ENCODE measurements at regions of chr3 and their contacts with region 1.

Region 1: GRCh38 chr3:47282424-47283192 is at the starts of genes KIF9 and KLHL18:
- DNase-seq: peak; percentile 94 to 99 (median 96)
- ATAC-seq: peak; percentile 93
- H3K4me3 ChIP-seq: peak within 1 kb of the TSS; percentile 82
- H3K27ac ChIP-seq: peak within 1 kb of the TSS; percentile 86
- H3K4me1 ChIP-seq: peaks cover 12 to 14% of the 10 kb centered on the region in 2 experiments
- H3K27me3 ChIP-seq: no peaks in the 10 kb centered on the region
- CTCF ChIP-seq: 0 out of 6 replicates have a peak, but pooled peaks of 1 of the 3 experiments have one; percentile 4
- EP300 ChIP-seq: peak; percentile 36; the same call in 1 of the 2 replicates
- POLR2A ChIP-seq: peak; percentile 90
- RAD21 ChIP-seq: no peak; a peak in 1 of 4 replicates
- polyA plus RNA-seq, gene KIF9: 52.1 to 56.9 TPM
- polyA plus RNA-seq, gene KLHL18: 81.5 to 97.5 TPM

Region 2: GRCh38 chr3:47083786-47084185 is 198.8 kb before region 1 on chr3:
- CTCF ChIA-PET with region 1: no interaction called
- POLR2A ChIA-PET with region 1: no interaction called
- in situ Hi-C with region 1: no loop called
- intact Hi-C with region 1: no loop called
- DNase-seq: no peak
- ATAC-seq: no peak
- H3K4me3 ChIP-seq: no peak overlapping the region
- H3K27ac ChIP-seq: no peak overlapping the region
- H3K4me1 ChIP-seq: no peaks in the 10 kb centered on the region
- H3K27me3 ChIP-seq: no peaks in the 10 kb centered on the region
- CTCF ChIP-seq: no peak
- EP300 ChIP-seq: no peak
- POLR2A ChIP-seq: no peak
- RAD21 ChIP-seq: no peak

Region 3: DNA sequence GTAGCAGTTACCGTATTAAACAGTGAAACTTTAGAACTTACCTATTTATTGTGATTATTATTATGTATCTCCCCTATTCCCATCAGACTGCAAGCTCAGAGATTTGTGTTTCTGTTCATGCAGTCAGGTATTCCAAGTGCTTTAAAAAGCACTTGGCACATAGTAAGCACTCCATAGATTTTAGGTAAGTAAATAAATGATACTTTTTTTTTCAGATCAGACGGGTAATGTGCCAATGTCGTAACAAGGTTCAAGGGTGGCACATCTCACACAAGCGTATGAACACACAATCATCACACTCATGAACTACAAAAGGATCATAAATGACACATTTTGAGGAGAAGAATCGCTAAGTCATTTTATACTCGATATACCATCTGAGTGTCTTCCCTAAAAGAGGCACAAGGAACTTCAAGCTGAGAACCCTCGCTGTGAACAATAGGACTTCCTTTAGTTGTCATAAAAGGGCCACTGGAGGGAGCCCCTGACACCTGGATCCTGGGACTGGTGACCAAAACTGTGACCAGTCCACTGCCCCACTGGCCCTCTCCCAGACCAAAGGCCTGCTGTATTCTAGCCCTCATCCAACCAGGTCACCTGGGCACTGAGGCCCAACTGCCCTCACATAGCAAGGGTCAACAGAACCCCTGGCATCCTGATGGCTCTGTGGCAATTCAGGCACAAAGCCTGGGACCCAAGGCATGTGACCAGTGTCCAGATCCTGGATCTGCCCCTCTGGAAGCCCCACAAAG is 32.1 kb before region 1 on chr3:
- CTCF ChIA-PET with region 1: no interaction called
- POLR2A ChIA-PET with region 1: interaction called, 3 read pairs
- in situ Hi-C with region 1: no loop called
- intact Hi-C with region 1: loop called (anchors 2 kb)
- DNase-seq: peak; percentile 72 to 86 (median 80)
- ATAC-seq: peak; percentile 96
- H3K4me3 ChIP-seq: no peak overlapping the region
- H3K27ac ChIP-seq: no peak overlapping the region; the same call in 2 of the 3 replicates
- H3K4me1 ChIP-seq: peaks cover 4 to 12% of the 10 kb centered on the region in 2 experiments; a peak in 3 of 5 replicates
- H3K27me3 ChIP-seq: no peaks in the 10 kb centered on the region
- CTCF ChIP-seq: peak; percentile 84 to 90 (median 87)
- EP300 ChIP-seq: no peak
- POLR2A ChIP-seq: no peak
- RAD21 ChIP-seq: peak; percentile 87 to 96

Region 4: DNA sequence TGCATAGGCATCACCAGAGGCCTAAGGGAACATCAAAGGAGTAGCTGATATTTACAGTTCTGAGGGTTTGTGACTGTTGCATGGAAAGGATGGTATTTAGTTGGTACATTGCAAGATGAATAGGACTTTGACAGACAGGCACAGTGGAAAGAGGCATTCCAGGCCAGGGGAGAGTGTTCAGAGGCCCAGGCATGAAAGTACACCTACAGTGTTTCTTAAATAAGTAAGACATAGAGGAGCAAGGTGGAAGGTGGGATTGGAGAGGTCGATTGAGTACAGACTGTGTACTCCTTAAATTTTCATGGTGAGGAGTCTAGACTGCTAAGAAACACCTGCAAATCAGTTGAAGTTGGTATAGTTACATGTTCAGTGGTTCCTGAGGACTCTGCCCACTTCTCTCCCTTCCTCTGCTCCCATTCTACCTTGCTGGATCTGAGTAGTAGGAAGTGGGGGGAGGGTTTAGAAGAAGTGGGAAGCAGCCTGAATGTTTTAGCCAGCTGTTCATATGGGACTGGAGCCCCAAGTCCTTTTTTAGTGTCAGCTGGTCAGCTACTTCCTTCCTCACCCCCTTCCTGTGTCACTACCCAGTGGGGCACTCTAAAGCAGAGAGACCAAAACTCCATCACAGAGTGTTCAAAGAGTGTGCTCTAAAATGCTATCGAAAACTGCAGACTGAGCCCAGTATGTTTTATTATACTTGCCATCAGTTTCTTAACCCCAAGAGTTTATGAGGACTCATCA is 14.1 kb after region 1 on chr3:
- CTCF ChIA-PET with region 1: no interaction called
- POLR2A ChIA-PET with region 1: interaction called, 31 read pairs
- in situ Hi-C with region 1: no loop called
- intact Hi-C with region 1: no loop called
- DNase-seq: no peak
- ATAC-seq: peak; percentile 7; the same call in 2 of the 3 replicates
- H3K4me3 ChIP-seq: no peak overlapping the region
- H3K27ac ChIP-seq: no peak overlapping the region; the same call in 2 of the 3 replicates
- H3K4me1 ChIP-seq: peaks cover 11 to 50% of the 10 kb centered on the region in 2 experiments; a peak in 4 of 5 replicates
- H3K27me3 ChIP-seq: no peaks in the 10 kb centered on the region
- CTCF ChIP-seq: no peak
- EP300 ChIP-seq: no peak
- POLR2A ChIP-seq: no peak
- RAD21 ChIP-seq: no peak

Region 5: GRCh38 chr3:47315069-47315647 is 32.5 kb after region 1 on chr3:
- CTCF ChIA-PET with region 1: no interaction called
- POLR2A ChIA-PET with region 1: interaction called, 8 read pairs
- in situ Hi-C with region 1: loop called (anchors 5 kb)
- intact Hi-C with region 1: loop called (anchors 1 kb)
- DNase-seq: peak; percentile 33 to 92 (median 60)
- ATAC-seq: peak; percentile 83
- H3K4me3 ChIP-seq: no peak overlapping the region
- H3K27ac ChIP-seq: peak overlapping the region; percentile 65
- H3K4me1 ChIP-seq: peaks cover 24 to 52% of the 10 kb centered on the region in 2 experiments
- H3K27me3 ChIP-seq: no peaks in the 10 kb centered on the region; a peak in 1 of 5 replicates
- CTCF ChIP-seq: no peak
- EP300 ChIP-seq: peak; percentile 97
- POLR2A ChIP-seq: no peak
- RAD21 ChIP-seq: peak; percentile 19 to 38; a peak in 3 of 4 replicates